ENCODE measurements at regions of chr19 and their contacts with region 1.

Region 1: DNA sequence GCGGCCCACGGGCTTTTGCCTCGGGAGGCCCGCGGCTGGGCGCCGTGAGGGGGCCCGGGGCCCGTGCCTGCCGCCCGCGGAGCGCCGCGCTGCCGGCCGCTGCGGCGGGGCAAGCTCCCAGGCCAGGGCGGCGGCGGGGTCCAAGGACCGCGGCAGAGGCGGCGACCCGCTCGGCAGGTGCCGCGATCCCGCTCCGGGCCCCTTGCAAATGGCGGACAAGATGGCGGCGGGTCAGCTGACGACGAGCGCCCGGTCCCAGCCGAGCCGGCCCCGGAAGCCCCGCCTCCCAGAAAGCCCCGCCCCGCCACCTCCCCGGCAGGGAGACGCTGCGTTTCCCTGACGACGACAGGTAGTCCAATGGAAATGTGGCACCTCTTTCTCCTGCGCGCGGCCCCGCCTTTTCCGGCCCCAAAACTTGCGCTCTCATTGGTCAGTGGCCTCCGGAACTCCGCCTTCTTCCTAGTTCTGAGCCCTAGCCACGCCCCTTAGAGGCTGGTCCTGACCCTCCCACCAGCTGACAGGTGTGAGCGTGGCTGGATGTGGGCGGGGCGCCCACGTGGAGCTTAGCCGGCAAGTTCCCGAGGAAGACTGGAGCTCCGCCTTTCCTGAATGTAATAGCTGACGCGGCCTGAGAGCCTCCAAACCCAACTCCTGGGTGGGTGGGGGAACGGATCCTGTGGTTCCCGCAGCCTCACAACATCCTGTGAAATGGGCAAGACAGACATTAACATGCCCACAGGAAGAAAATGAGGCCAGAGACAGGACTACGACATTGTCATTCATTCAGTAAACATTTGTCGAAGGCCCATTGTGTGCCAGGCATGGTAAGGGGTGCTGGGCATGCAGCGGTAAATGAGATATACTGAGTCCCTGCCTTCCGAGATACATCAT is at the start of gene AP3D1:
- DNase-seq: peak; percentile 100
- ATAC-seq: peak; percentile 90
- H3K4me3 Mint-ChIP-seq: peak within 1 kb of the TSS; percentile 81
- H3K27ac Mint-ChIP-seq: peak within 1 kb of the TSS; percentile 89
- H3K4me1 Mint-ChIP-seq: peaks cover 42% of the 10 kb centered on the region
- H3K27me3 Mint-ChIP-seq: no peaks in the 10 kb centered on the region
- total RNA-seq, gene AP3D1: 82.7 to 105 TPM

Region 2: GRCh38 chr19:1905071-1905862 is 246.3 kb before region 1 on chr19 and contains the starts of genes ADAT3 and SCAMP4:
- CTCF ChIA-PET with region 1: no interaction called
- POLR2A ChIA-PET with region 1: no interaction called
- intact Hi-C with region 1: loop called in 1 of 2 experiments (anchors 1 kb)
- DNase-seq: peak; percentile 100
- ATAC-seq: peak; percentile 98
- H3K4me3 Mint-ChIP-seq: peak within 1 kb of the TSS; percentile 84
- H3K27ac Mint-ChIP-seq: peak within 1 kb of the TSS; percentile 82
- H3K4me1 Mint-ChIP-seq: peaks cover 45% of the 10 kb centered on the region
- H3K27me3 Mint-ChIP-seq: no peaks in the 10 kb centered on the region
- total RNA-seq, gene ADAT3: 5.6 to 6.1 TPM
- total RNA-seq, gene SCAMP4: 20.5 to 25.6 TPM

Region 3: DNA sequence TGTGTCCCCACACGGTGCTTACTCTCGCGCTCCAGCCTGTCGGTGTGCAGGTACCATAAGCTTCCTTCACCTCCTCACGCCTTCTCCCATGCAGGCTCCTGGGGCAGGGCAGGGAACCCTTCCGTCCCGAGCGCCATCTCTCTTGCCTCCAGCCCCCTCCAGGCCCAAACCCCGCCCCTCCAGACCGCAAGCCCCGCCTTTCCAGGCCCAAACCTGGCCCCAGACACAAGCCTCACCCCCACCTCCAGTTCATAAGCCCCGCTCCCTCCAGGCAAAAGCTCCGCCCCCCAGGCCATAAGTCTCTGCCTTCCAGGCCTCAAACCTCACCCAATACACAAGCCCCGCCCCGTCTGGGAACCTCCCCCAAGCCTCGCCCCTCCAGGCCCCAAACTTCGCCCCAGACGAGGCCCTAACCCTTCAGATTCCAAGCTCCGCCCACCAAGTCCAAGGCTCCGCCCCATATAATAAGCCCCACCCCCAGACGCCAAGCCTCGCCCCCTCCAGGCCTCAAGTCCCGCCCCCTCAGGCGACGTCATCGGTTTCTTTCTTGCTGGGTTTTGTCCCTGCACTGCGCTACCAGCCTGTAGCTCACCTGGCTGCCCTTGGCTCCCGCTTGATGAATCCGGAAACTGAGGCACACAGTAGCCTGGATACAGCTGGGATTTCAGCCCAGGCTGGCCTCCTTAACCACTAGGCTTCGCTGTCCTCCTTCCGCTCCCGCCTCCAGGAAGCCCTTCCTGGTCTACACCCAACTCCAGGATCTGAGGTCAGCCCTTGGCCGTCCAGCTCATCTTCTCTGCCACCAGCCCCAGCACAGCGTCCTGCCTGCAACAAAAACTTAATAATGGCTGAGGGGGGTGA is 116.6 kb before region 1 on chr19:
- CTCF ChIA-PET with region 1: no interaction called
- POLR2A ChIA-PET with region 1: interaction called, 5 read pairs
- intact Hi-C with region 1: loop called in 1 of 2 experiments (anchors 5 kb)
- DNase-seq: peak; percentile 90
- ATAC-seq: peak; percentile 70
- H3K4me3 Mint-ChIP-seq: no peak overlapping the region
- H3K27ac Mint-ChIP-seq: no peak overlapping the region
- H3K4me1 Mint-ChIP-seq: peaks cover 31% of the 10 kb centered on the region
- H3K27me3 Mint-ChIP-seq: no peaks in the 10 kb centered on the region

Region 4: DNA sequence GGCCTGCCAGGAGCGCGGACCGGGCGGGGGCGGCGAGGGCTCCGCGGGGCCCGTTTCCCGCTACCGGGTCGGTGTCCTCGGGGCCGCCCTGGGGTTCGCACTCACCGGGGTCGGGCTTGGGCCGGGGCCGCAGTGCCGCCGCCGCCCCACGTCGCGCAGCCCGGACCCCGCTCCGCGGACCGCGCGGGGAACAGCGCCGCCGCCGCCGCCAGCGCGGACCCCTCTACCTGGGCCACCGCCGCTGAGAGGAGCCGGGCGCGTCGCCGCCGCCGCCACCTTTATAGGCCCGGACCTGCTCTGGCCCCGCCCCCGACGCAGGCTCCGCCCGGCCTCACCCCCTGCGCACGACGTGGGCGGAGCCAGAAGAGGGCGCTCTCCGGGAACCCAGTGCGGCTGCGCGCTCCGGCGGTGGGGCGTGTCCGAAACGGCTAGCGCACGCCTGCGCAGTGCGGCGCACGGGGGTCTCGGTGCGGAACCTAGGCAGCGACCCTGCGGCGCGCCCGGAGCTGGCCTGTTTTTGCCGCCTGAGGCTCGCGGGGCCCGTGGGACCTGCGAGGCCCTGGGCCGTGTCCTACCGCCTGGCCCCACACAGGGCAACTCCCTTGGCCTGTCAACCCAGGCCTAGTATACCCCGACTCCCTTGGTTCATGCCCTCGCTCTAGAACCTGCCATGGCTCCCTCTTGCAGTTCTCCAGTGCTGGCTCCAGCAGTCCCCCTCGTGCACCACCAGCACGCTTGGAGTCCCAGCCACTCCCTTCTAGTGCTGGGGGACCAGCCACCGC is 100.4 kb before region 1 on chr19 and contains the start of gene MKNK2:
- CTCF ChIA-PET with region 1: no interaction called
- POLR2A ChIA-PET with region 1: no interaction called
- intact Hi-C with region 1: loop called in 1 of 2 experiments (anchors 1 kb)
- DNase-seq: peak; percentile 98
- ATAC-seq: peak; percentile 80
- H3K4me3 Mint-ChIP-seq: peak within 1 kb of the TSS; percentile 82
- H3K27ac Mint-ChIP-seq: peak within 1 kb of the TSS; percentile 94
- H3K4me1 Mint-ChIP-seq: peaks cover 51% of the 10 kb centered on the region
- H3K27me3 Mint-ChIP-seq: no peaks in the 10 kb centered on the region
- total RNA-seq, gene MKNK2: 139 to 155 TPM

Region 5: GRCh38 chr19:2269244-2269947 is 117.8 kb after region 1 on chr19:
- CTCF ChIA-PET with region 1: no interaction called
- POLR2A ChIA-PET with region 1: no interaction called
- intact Hi-C with region 1: loop called (anchors 1 to 2 kb)
- DNase-seq: peak; percentile 99
- ATAC-seq: peak; percentile 81
- H3K4me3 Mint-ChIP-seq: peak overlapping the region; percentile 89
- H3K27ac Mint-ChIP-seq: peak overlapping the region; percentile 88
- H3K4me1 Mint-ChIP-seq: peaks cover 38% of the 10 kb centered on the region
- H3K27me3 Mint-ChIP-seq: no peaks in the 10 kb centered on the region

Region 6: GRCh38 chr19:2391118-2391725 is 239.6 kb after region 1 on chr19:
- CTCF ChIA-PET with region 1: interaction called, 4 read pairs
- POLR2A ChIA-PET with region 1: no interaction called
- intact Hi-C with region 1: loop called (anchors 1 to 5 kb)
- DNase-seq: peak; percentile 57
- ATAC-seq: peak; percentile 80
- H3K4me3 Mint-ChIP-seq: no peak overlapping the region
- H3K27ac Mint-ChIP-seq: no peak overlapping the region
- H3K4me1 Mint-ChIP-seq: peaks cover 2% of the 10 kb centered on the region
- H3K27me3 Mint-ChIP-seq: peaks cover 2% of the 10 kb centered on the region

Region 7: DNA sequence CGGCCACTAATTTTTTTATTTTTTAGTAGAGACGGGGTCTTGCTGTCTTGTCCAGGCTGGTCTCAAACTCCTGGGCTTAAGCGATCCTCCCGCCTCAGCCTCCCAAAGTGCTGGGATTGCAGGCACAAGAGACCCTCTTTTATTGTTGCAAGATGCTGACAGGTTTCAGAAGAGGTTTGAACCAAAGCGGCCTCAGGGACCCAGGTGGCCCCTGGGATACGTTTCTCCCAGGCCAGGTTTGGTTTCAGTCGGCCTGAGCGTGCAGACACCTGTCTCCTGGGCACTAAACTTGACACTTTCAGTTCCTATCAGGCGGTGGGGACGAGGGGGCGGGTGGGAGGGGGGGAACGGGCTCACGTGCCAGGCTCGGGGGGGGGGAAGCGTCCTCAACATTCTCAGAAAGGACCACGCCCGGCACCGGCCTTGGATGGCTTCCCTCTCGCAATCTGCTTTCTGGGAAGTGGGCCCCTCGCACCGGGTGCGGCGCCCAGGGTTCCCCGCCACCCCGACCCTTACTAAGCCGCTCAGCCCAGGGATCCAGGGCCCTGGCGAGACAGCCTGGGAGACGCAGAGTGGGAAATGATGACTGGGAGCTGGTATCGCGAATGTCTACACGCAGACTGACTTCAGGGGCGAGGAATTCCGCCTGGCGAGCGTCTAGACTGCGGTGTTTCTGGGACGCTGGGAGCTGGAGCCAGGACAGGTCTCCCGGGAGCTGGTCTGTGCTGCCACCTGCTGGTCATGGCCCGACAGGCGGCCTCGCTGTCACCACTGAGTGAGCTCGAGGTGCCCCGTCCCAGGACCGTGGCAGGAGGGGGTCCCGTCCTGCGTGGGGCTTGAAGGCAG is 459.3 kb after region 1 on chr19:
- CTCF ChIA-PET with region 1: no interaction called
- POLR2A ChIA-PET with region 1: no interaction called
- intact Hi-C with region 1: loop called (anchors 5 to 10 kb)
- DNase-seq: peak; percentile 96
- ATAC-seq: peak; percentile 67
- H3K4me3 Mint-ChIP-seq: peak overlapping the region; percentile 71
- H3K27ac Mint-ChIP-seq: peak overlapping the region; percentile 83
- H3K4me1 Mint-ChIP-seq: peaks cover 53% of the 10 kb centered on the region
- H3K27me3 Mint-ChIP-seq: peaks cover 5% of the 10 kb centered on the region